ENCODE measurements at regions of chr11 and their contacts with region 1.

Region 1: GRCh38 chr11:118610804-118611795 is 3.7 kb downstream of the PHLDB1 start:
- DNase-seq: peak in 1 of 2 donors; percentile 91
- H3K4me3 ChIP-seq: peak overlapping the region; percentile 64 to 77
- H3K27ac ChIP-seq: peak overlapping the region; percentile 94 to 99
- H3K4me1 ChIP-seq: peaks cover 12 to 46% of the 10 kb centered on the region in 2 donors
- H3K27me3 ChIP-seq: no peaks in the 10 kb centered on the region
- CTCF ChIP-seq: peak; percentile 82 to 94 (median 91)

Region 2: DNA sequence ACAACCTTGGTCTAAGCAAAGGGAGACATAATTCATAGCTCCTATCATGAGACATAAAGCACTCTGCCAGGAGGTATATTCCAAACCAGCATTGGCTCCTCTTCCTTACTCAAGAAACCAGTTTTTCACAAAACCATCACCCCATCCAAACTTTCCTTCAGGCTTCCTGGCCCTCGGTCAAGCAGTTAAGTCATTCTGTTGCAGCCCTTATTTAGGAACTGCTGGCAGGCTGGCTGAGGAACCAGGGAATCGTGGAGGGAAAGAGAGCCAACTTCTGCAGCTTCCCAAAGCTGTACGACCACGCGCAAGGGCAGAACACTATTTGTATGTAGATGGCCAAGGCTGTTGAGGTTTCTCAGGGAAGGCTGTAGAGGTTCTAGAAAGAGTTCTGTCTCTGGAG is 46.0 kb before region 1 on chr11:
- intact Hi-C with region 1: loop called (anchors 2 kb)
- DNase-seq: peak in 1 of 2 donors; percentile 72
- H3K4me3 ChIP-seq: peak overlapping the region; percentile 53 to 75
- H3K27ac ChIP-seq: peak overlapping the region; percentile 75 to 88
- H3K4me1 ChIP-seq: peaks cover 0 to 5% of the 10 kb centered on the region in 2 donors
- H3K27me3 ChIP-seq: no peaks in the 10 kb centered on the region
- CTCF ChIP-seq: no peak

Region 3: DNA sequence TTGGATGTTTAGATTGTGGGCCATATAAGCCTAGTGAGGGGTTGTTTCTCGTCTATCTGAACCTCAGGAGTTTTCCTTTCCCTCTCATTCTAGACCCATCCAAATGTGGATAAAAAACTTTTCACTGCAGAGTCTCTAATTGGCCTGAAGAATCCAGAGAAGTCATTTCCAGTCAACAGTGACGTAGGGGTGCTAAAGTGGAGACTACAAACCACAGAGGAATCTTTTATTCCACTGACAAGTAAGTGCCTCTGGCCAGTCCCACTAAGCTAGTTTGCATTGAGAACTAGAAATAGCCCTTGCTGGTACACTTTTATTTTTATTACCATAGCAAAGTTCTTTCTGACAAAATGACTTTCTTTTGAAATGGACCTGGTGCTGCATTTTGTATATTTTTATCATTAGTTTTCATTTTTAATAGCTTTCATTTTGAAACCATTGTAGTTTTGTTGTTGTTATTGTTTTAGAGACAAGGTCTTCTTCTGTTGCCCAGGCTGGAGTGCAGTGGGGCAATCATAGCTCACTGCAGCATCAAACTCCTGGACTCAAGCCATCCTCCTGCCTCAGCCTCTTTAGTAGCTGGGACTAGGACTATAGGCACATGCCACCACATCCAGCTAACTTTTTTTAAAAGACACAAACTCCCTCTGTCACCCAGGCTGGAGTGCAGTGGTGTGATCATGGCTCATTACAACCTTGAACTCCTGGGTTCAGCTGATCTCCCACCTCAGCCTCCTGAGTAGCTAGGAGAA is 18.3 kb before region 1 on chr11:
- intact Hi-C with region 1: loop called (anchors 2 kb)
- DNase-seq: peak in 1 of 2 donors; percentile 76
- H3K4me3 ChIP-seq: no peak overlapping the region
- H3K27ac ChIP-seq: peak overlapping the region; percentile 88 to 90
- H3K4me1 ChIP-seq: peaks cover 6 to 27% of the 10 kb centered on the region in 2 donors
- H3K27me3 ChIP-seq: no peaks in the 10 kb centered on the region
- CTCF ChIP-seq: no peak

Region 4: DNA sequence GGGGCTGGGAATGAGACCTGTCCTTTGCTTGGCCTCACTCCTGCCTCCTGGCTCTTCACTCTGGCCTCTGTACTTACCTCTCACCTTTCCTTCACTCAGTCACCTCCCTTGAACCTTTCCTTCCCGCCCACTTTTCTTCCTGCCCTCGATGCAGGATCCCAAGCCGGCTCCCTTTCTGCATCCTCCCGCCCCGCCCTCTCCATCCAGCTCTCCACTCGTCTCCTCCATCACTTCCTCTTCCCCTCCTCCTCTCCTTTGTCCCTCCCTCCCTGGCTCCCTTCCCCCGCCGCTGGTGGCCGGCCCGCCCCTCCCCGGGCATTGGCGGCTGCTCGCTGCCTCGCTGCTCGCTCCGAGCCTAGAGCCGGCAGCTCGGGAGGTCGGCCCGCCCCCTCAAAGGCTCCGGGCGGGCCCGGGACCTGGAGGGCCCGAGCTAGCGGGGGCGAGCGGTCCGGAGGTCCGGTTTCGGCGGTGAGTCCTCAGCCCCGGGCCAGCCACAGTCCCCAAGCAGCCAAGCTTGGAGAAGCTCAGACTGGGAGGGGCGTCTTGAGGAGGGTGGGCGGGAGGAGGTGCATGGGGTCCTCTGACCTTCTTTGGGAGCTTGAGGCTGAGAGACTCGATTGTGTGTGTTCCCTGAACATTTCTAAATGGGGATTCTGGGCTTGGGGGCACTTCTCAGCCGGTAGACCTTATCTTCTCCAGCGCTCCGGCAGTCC is 10.1 kb after region 1 on chr11:
- intact Hi-C with region 1: loop called (anchors 1 kb)
- DNase-seq: peak in 1 of 2 donors; percentile 95
- H3K4me3 ChIP-seq: peak overlapping the region; percentile 73
- H3K27ac ChIP-seq: peak overlapping the region; percentile 95 to 99
- H3K4me1 ChIP-seq: peaks cover 31 to 67% of the 10 kb centered on the region in 2 donors
- H3K27me3 ChIP-seq: no peaks in the 10 kb centered on the region
- CTCF ChIP-seq: no peak

Region 5: GRCh38 chr11:118634431-118635236 is 23.5 kb after region 1 on chr11:
- intact Hi-C with region 1: loop called (anchors 2 kb)
- DNase-seq: peak in 1 of 2 donors; percentile 89
- H3K4me3 ChIP-seq: peak overlapping the region; percentile 43 to 54
- H3K27ac ChIP-seq: peak overlapping the region; percentile 74 to 86
- H3K4me1 ChIP-seq: peaks cover 22 to 28% of the 10 kb centered on the region in 2 donors
- H3K27me3 ChIP-seq: no peaks in the 10 kb centered on the region
- CTCF ChIP-seq: peak; percentile 5 to 39 (median 39)

Region 6: DNA sequence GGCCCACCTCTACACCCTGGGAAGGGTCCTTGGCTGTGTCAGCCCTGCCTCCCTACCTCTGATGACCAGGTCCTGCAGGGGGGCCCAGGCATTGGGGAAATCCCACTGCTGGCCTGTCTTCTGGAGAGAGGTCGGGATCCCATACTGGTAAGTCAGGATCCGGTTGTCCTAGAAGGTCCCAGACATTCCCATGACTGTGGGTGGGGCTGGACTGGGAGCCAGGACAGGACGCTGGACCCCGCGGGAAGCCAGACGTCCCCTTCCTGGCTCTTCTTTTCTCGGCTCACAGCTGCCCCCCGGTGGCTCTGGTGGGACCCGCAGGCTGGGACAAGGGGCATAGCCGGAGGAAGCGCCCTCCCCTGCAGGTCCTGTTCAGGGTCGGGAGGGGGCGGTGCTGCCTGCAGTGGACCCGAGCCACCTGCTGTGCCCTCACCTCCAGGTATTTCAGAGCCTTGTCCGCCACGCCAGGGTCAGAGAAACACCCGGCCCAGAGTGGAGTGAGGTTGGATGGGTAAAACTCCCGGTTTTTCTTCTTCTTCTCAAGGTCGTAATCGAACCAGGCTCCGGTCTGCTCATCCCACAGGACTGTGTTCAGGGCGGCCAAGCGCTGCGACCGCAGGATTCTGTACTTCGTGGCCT is 48.3 kb after region 1 on chr11:
- intact Hi-C with region 1: loop called (anchors 2 kb)
- DNase-seq: peak; percentile 63 to 96
- H3K4me3 ChIP-seq: no peak overlapping the region
- H3K27ac ChIP-seq: peak overlapping the region; percentile 66 to 74
- H3K4me1 ChIP-seq: peaks cover 0 to 2% of the 10 kb centered on the region in 2 donors
- H3K27me3 ChIP-seq: no peaks in the 10 kb centered on the region
- CTCF ChIP-seq: peak; percentile 95 to 98 (median 98)